ENCODE measurements at regions of chr4 and their contacts with region 1.

Region 1: GRCh38 chr4:6574747-6575502 is at the start of gene MAN2B2:
- DNase-seq: peak; percentile 93
- H3K4me3 ChIP-seq: peak within 1 kb of the TSS; percentile 69 to 86 (median 82)
- H3K27ac ChIP-seq: peak within 1 kb of the TSS; percentile 62 to 83 (median 70)
- H3K4me1 ChIP-seq: peaks cover 5 to 16% (median 14%) of the 10 kb centered on the region in 4 donors
- H3K27me3 ChIP-seq: no peaks in the 10 kb centered on the region
- CTCF ChIP-seq: peak in 3 of 5 experiments; percentile 5 to 29 (median 21)
- EP300 ChIP-seq: no peak
- POLR2A ChIP-seq: peak; percentile 74
- total RNA-seq, gene MAN2B2: 17.5 to 55.9 (median 27.6) TPM

Region 2: GRCh38 chr4:6269616-6270511 is 305.1 kb before region 1 on chr4 and contains the start of gene WFS1:
- in situ Hi-C with region 1: loop called in 1 of 4 experiments (anchors 25 kb)
- intact Hi-C with region 1: no loop called
- DNase-seq: peak; percentile 99
- H3K4me3 ChIP-seq: peak within 1 kb of the TSS; percentile 60 to 97 (median 86)
- H3K27ac ChIP-seq: peak within 1 kb of the TSS; percentile 81 to 94 (median 92)
- H3K4me1 ChIP-seq: peaks cover 30 to 49% (median 38%) of the 10 kb centered on the region in 4 donors
- H3K27me3 ChIP-seq: no peaks in the 10 kb centered on the region
- CTCF ChIP-seq: no peak
- EP300 ChIP-seq: no peak
- POLR2A ChIP-seq: peak; percentile 81
- total RNA-seq, gene WFS1: 11.5 to 23.5 (median 20.8) TPM

Region 3: GRCh38 chr4:6502147-6502546 is 72.8 kb before region 1 on chr4:
- in situ Hi-C with region 1: no loop called
- intact Hi-C with region 1: loop called (anchors 2 kb)
- DNase-seq: no peak
- H3K4me3 ChIP-seq: no peak overlapping the region
- H3K27ac ChIP-seq: no peak overlapping the region
- H3K4me1 ChIP-seq: no peaks in the 10 kb centered on the region
- H3K27me3 ChIP-seq: no peaks in the 10 kb centered on the region
- CTCF ChIP-seq: no peak
- EP300 ChIP-seq: no peak
- POLR2A ChIP-seq: no peak

Region 4: DNA sequence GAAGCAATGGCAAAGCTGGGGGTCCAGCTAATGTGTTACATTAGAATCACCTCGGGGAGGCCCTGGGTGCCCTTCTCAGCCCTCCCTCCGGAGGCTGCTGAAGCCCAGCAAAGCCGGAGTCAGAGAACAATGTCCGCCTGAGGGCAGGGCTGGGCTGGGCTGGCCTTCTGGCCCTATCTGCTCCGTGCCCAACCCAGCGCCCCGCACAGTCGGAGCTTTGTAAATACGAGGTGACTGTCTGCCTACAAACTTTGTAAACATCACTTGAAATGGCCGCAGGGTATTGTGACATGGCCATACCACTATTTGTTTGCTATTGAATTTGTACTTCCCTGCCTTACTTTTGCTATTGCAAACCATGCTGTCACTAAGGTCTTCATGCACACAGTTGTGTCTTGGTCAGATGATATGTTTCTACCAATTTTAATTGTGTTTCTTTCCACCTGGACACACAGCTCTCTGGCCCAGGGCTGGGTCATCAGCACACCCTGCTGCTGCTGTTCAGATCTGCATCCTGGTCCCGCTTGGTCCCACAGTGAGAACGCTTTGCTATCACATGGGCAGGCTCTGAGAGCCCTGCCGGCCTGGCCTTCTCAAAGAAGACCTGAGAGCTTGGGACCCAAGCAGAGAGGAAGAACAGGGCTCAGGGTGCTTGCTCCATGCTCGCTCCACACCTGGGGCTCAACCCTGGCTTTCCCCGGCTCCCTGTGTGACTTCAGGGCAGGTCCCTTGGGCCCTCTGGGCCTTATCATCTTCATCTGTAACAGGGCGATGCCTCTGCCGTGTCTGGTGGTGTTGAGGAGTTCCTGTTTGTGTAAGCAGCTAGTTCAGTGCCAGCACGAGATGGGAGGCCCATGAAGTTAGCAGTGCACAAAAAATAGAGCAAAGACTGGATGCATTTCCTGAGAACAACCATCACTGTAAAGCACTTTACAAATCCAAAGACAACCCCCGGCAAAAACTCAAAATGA is 121.0 kb after region 1 on chr4:
- in situ Hi-C with region 1: no loop called
- intact Hi-C with region 1: no loop called
- DNase-seq: peak; percentile 71
- H3K4me3 ChIP-seq: no peak overlapping the region
- H3K27ac ChIP-seq: peak overlapping the region; percentile 8 to 70 (median 55)
- H3K4me1 ChIP-seq: peaks cover 0 to 26% (median 10%) of the 10 kb centered on the region in 4 donors
- H3K27me3 ChIP-seq: no peaks in the 10 kb centered on the region
- CTCF ChIP-seq: no peak
- EP300 ChIP-seq: no peak
- POLR2A ChIP-seq: no peak

Measured in transverse colon (tissue), 4 donors.